Breast epithelium (tissue), 4 donors: ENCODE measurements at regions of chr6 and their contacts with region 1.

Region 1: DNA sequence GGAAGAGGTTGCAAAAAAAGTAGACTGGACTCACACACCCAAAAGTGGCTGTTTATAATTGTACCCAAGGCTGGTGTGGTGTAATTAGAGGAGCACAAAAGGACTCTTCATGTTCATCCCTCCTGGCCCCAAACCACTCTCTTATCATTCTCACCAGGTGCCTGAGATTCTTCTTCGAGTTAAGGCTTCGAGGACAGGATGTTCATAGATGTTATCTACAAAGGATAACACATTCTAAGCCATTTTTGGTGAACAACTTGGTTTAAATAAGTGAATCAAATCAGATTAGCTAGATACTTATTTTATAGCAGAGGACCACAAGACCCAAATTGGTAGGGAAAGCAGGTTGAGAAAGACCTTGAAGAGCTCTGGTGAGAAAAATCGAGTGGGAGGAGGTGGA is 73.1 kb upstream of the SUPT3H start:
- DNase-seq: no peak
- H3K4me3 ChIP-seq: no peak overlapping the region
- H3K27ac ChIP-seq: no peak overlapping the region
- H3K4me1 ChIP-seq: peaks cover 0 to 5% of the 10 kb centered on the region in 2 donors
- H3K27me3 ChIP-seq: no peaks in the 10 kb centered on the region
- CTCF ChIP-seq: no peak
- POLR2A ChIP-seq: no peak

Region 2: DNA sequence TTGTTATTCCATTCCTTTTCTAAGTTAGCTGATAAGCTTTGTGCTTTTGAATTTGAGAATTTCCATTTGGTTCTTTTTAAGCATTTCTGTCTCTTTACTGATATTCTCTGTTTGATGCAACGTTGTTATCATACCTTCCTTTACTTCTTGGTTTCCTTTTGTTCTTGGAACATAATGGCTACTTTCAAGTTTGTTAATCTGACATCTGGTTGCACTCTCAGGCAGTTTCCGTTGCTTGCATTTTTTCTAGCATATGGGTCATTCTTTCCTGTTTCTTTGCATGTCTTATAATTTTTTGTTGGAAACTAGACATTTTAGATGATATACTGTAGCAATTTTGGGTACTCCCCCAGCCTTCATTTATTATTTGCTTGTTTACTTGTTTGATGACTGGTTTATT is 1050.8 kb before region 1 on chr6:
- intact Hi-C with region 1: no loop called
- DNase-seq: no peak
- H3K4me3 ChIP-seq: no peak overlapping the region
- H3K27ac ChIP-seq: no peak overlapping the region
- H3K4me1 ChIP-seq: no peaks in the 10 kb centered on the region
- H3K27me3 ChIP-seq: no peaks in the 10 kb centered on the region
- CTCF ChIP-seq: no peak
- POLR2A ChIP-seq: no peak

Region 3: GRCh38 chr6:45148711-45149341 is 302.0 kb before region 1 on chr6:
- intact Hi-C with region 1: no loop called
- DNase-seq: no peak
- H3K4me3 ChIP-seq: no peak overlapping the region
- H3K27ac ChIP-seq: no peak overlapping the region
- H3K4me1 ChIP-seq: no peaks in the 10 kb centered on the region
- H3K27me3 ChIP-seq: no peaks in the 10 kb centered on the region
- CTCF ChIP-seq: no peak
- POLR2A ChIP-seq: no peak

Region 4: DNA sequence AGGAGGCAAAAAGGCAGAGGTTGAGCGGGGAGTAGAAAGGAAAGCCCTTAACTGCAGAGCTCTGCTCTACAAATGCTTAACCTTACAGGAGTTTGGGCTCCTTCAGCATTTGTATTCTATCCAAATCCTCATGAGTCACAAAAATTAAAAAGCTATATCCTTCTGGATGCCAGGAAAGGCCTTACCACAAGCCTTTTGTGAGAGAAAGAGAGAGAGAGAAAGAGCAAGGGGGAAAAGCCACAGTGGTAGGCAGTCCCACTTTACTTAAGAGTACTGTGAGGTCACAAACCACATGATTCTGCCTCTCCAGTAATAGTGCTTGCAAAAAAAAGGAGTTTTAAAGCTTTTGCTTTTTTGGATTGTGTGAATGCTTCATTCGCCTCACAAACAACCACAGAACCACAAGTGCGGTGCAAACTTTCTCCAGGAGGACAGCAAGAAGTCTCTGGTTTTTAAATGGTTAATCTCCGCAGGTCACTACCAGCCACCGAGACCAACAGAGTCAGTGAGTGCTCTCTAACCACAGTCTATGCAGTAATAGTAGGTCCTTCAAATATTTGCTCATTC is 122.8 kb before region 1 on chr6 and contains the start of gene RUNX2:
- intact Hi-C with region 1: no loop called
- DNase-seq: no peak
- H3K4me3 ChIP-seq: peak within 1 kb of the TSS in 2 of 3 donors; percentile 26 to 28
- H3K27ac ChIP-seq: peak within 1 kb of the TSS; percentile 20 to 42
- H3K4me1 ChIP-seq: no peaks in the 10 kb centered on the region
- H3K27me3 ChIP-seq: no peaks in the 10 kb centered on the region
- CTCF ChIP-seq: no peak
- POLR2A ChIP-seq: no peak
- total RNA-seq, gene RUNX2: 2.7 to 7.3 (median 7.2) TPM

Region 5: GRCh38 chr6:45377554-45378333 is 73.1 kb before region 1 on chr6 and contains the start of gene SUPT3H:
- intact Hi-C with region 1: loop called (anchors 2 kb)
- DNase-seq: peak; percentile 74 to 85
- H3K4me3 ChIP-seq: peak within 1 kb of the TSS; percentile 65 to 93 (median 69)
- H3K27ac ChIP-seq: peak within 1 kb of the TSS; percentile 97 to 99
- H3K4me1 ChIP-seq: no peaks in the 10 kb centered on the region
- H3K27me3 ChIP-seq: no peaks in the 10 kb centered on the region
- CTCF ChIP-seq: no peak
- POLR2A ChIP-seq: peak; percentile 54
- total RNA-seq, gene SUPT3H: 6.9 to 15.1 (median 13.6) TPM

Region 6: GRCh38 chr6:45411959-45412358 is 38.9 kb before region 1 on chr6:
- intact Hi-C with region 1: no loop called
- DNase-seq: no peak
- H3K4me3 ChIP-seq: no peak overlapping the region
- H3K27ac ChIP-seq: no peak overlapping the region
- H3K4me1 ChIP-seq: no peaks in the 10 kb centered on the region
- H3K27me3 ChIP-seq: no peaks in the 10 kb centered on the region
- CTCF ChIP-seq: no peak
- POLR2A ChIP-seq: no peak